ENCODE measurements at regions of chr12 and their contacts with region 1.

Region 1: GRCh38 chr12:68113644-68114043 is 45.9 kb downstream of the IFNG start:
- DNase-seq: peak; percentile 74
- ATAC-seq: peak; percentile 54
- H3K4me3 Mint-ChIP-seq: no peak overlapping the region
- H3K27ac Mint-ChIP-seq: no peak overlapping the region
- H3K4me1 Mint-ChIP-seq: peaks cover 25% of the 10 kb centered on the region
- H3K27me3 Mint-ChIP-seq: peaks cover 2% of the 10 kb centered on the region
- CTCF ChIP-seq: peak; percentile 62

Region 2: DNA sequence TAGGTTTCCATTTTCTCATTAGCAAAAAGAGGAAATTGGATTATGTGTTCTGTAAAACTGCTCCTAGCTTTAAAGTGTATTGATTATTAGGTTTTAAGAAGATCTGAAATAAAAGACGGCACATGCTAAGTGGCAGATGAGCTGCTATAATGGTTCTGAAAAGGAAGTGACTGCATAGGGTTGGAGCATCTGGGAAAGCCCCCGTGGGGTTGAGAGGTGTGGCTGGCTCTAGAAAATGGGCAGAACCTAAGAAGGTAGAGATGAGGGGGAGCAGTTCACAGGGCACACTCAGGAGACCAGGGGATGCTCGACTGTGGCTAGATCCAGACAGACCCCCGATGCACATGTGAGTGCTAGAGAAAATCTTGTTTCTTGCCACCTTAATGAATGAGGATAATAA is 122.5 kb before region 1 on chr12:
- CTCF ChIA-PET with region 1: no interaction called
- POLR2A ChIA-PET with region 1: no interaction called
- intact Hi-C with region 1: no loop called
- DNase-seq: peak; percentile 66
- ATAC-seq: peak; percentile 88
- H3K4me3 Mint-ChIP-seq: peak overlapping the region; percentile 47
- H3K27ac Mint-ChIP-seq: peak overlapping the region; percentile 78
- H3K4me1 Mint-ChIP-seq: peaks cover 42% of the 10 kb centered on the region
- H3K27me3 Mint-ChIP-seq: no peaks in the 10 kb centered on the region
- CTCF ChIP-seq: no peak

Region 3: GRCh38 chr12:68094645-68095395 is 18.8 kb before region 1 on chr12:
- CTCF ChIA-PET with region 1: interaction called, 13 read pairs
- POLR2A ChIA-PET with region 1: no interaction called
- intact Hi-C with region 1: no loop called
- DNase-seq: no peak
- ATAC-seq: no peak
- H3K4me3 Mint-ChIP-seq: no peak overlapping the region
- H3K27ac Mint-ChIP-seq: no peak overlapping the region
- H3K4me1 Mint-ChIP-seq: peaks cover 11% of the 10 kb centered on the region
- H3K27me3 Mint-ChIP-seq: no peaks in the 10 kb centered on the region
- CTCF ChIP-seq: no peak